ENCODE measurements at regions of chr2 and their contacts with region 1.

Region 1: DNA sequence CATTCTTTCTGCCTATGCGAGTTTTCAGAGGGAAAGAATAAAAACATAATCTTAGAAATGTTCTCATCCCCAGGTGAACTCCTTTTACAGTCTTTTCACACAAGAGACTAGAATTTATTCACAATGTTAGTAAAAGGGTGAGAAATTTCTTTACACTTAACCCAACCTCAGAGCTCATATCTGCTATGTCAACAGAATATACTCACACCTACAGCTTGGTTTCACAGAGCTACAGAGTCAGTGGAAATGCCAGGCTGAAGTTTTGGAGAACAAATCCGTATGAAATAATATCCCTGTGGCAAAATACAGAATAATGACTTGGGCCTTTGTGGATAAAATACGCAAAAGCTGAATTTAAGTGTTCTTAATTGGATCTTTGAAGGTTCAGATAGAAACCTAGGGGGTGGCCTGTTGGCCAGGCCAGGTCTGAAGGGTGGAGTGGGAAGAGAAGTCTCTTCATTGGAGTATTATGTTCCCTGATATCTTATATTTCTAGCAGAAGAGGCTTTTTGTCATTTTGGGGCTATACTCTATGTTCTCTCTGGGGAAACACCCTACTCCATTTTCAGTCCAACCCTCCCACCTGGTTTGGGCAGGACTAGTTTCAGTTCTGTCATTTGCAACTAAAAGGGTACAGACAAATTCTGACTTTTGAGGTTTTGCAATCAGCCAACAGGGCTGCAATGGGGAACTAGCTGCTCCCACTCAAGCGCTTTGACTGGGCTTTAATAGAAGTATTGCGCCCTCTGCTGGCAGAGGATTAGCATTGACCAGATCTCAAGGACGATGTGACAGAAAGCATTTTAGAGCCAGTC is 25.7 kb downstream of the FBXO48 start:
- DNase-seq: peak; percentile 38 to 86
- ATAC-seq: peak; percentile 90 to 95 (median 92)
- H3K4me3 ChIP-seq: no peak overlapping the region
- H3K27ac ChIP-seq: peak overlapping the region in 7 of 10 donors; percentile 16 to 64 (median 44)
- H3K4me1 ChIP-seq: peaks cover 3 to 30% (median 14%) of the 10 kb centered on the region in 9 donors
- H3K27me3 ChIP-seq: no peaks in the 10 kb centered on the region
- CTCF ChIP-seq: peak; percentile 83 to 95 (median 91)

Region 2: DNA sequence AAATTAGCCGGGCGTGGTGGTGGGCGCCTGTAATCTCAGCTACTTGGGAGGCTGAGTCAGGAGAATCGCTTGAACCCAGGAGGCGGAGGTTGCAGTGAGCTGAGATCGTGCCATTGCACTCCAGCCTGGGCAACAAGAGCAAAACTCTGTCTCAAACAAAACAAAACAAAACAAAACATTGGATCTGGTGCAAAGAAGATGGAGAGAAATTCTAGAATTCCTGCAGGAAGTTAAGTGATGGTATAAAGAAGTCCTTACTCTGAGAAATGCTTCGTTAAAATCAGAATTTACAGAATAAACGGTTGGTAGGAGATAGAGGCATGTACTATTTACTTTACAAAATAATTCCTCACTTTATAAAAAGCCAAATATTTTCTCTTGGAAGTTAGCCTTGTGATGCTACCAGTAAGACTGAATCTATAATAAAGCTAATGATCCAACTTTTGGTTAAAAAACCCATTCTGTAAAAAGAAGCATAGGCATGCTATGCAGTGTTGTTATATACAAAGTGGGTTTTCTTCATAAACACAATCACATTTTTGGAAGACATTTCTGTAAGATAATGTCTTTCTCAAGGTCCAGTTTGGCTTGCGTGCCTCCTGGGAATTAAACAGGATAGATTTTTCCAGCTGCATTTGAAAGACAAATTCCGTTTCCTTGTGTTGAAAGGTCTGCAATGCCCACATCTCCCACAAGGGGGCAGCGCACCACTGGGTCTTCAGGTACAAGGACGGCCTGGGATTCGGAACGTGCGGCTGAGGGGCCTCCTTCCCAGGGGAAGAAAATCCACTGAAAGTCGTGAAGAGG is 319.3 kb before region 1 on chr2:
- intact Hi-C with region 1: loop called in 9 of 10 experiments (anchors 1 to 10 kb)
- DNase-seq: peak; percentile 86 to 88
- ATAC-seq: peak in 7 of 8 donors; percentile 64 to 87 (median 84)
- H3K4me3 ChIP-seq: peak overlapping the region in 2 of 10 donors; percentile 5 to 14
- H3K27ac ChIP-seq: no peak overlapping the region
- H3K4me1 ChIP-seq: peaks cover 0 to 13% (median 8%) of the 10 kb centered on the region in 9 donors
- H3K27me3 ChIP-seq: no peaks in the 10 kb centered on the region
- CTCF ChIP-seq: peak in 8 of 9 donors; percentile 92 to 98 (median 98)

Region 3: GRCh38 chr2:68190991-68191731 is 250.2 kb before region 1 on chr2:
- intact Hi-C with region 1: loop called in 2 of 10 experiments (anchors 5 kb)
- DNase-seq: no peak
- ATAC-seq: no peak
- H3K4me3 ChIP-seq: no peak overlapping the region
- H3K27ac ChIP-seq: no peak overlapping the region
- H3K4me1 ChIP-seq: peaks cover 0 to 76% (median 26%) of the 10 kb centered on the region in 9 donors
- H3K27me3 ChIP-seq: no peaks in the 10 kb centered on the region
- CTCF ChIP-seq: no peak

Region 4: GRCh38 chr2:68196120-68196716 is 245.2 kb before region 1 on chr2:
- intact Hi-C with region 1: loop called in 2 of 10 experiments (anchors 5 kb)
- DNase-seq: peak in 1 of 2 donors; percentile 35
- ATAC-seq: peak in 2 of 8 donors; percentile 23 to 52
- H3K4me3 ChIP-seq: no peak overlapping the region
- H3K27ac ChIP-seq: no peak overlapping the region
- H3K4me1 ChIP-seq: peaks cover 0 to 79% (median 25%) of the 10 kb centered on the region in 9 donors
- H3K27me3 ChIP-seq: no peaks in the 10 kb centered on the region
- CTCF ChIP-seq: peak in 8 of 9 donors; percentile 50 to 85 (median 73)

Region 5: DNA sequence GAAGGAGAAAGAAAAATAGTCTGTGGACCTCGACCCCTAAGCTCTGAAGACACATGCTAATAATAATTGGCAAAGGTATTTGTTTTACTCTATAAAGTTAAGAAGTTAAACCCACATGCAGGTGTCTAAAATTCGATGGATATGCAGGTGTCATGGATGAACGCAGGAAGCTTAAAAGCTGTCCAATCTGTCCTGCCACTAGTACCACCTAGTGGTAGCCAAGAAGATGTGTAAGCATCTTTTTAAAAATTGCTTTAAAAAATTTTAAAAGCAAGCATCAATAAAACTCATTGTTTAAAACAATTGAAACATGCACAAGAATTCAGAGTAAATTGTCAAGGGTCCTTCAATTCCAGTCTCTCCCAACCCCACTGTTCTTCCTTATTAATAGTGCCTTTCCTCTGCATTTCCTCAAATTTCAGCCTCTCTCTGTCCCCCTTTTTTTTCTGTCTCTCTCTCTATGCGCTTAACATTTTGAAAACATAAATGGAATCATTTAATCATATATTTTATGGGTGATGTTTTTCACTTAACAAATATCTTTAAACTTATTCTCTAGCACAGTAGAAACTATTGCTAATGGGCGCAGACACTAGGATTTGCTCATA is 158.5 kb before region 1 on chr2:
- intact Hi-C with region 1: loop called in 1 of 10 experiments (anchors 10 kb)
- DNase-seq: no peak
- ATAC-seq: peak in 1 of 8 donors; percentile 59
- H3K4me3 ChIP-seq: no peak overlapping the region
- H3K27ac ChIP-seq: no peak overlapping the region
- H3K4me1 ChIP-seq: peaks cover 0 to 38% (median 18%) of the 10 kb centered on the region in 9 donors
- H3K27me3 ChIP-seq: no peaks in the 10 kb centered on the region
- CTCF ChIP-seq: peak; percentile 49 to 84 (median 74)

Region 6: DNA sequence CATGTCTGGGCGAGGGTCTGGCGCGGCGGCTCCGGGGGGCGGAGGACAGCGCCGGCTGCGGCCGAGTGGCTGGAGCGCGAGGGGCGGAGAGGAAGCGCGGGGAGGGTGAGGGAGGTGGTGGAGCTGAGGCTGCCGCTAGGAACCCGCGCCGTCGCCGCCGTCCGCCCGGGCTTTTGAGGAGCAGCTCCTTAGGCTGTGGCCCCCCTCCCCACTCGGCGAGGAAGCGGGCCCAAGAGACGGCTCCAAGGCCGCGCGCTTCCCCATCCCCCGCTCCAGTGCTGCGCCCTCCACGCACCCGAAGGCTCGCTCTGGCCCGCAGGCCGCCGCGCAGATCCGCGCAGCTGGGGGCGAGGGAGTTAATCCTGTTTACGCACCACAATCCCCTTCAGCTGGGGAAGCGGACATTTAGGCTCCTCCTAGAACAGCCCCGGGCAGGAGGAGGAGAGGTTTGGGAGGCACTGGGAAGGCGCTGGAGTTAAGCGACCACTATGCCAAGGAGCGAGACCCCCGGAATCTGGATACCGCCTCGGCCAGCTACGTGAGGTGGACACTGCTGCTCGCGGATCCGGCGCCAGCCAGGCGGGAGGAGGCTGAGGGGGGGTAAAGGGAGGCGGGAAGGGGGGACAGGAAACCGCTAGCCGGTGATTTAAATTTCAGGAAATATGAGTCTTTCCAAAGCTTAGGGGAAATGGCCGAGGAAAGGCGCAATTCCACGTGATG is 121.8 kb before region 1 on chr2 and contains the start of gene CNRIP1:
- intact Hi-C with region 1: loop called in 1 of 10 experiments (anchors 10 kb)
- DNase-seq: peak; percentile 77 to 87
- ATAC-seq: peak; percentile 84 to 95 (median 88)
- H3K4me3 ChIP-seq: peak within 1 kb of the TSS; percentile 61 to 93 (median 82)
- H3K27ac ChIP-seq: peak within 1 kb of the TSS; percentile 93 to 99 (median 98)
- H3K4me1 ChIP-seq: peaks cover 0 to 31% (median 20%) of the 10 kb centered on the region in 9 donors
- H3K27me3 ChIP-seq: peaks cover 0 to 27% (median 0%) of the 10 kb centered on the region in 7 donors
- CTCF ChIP-seq: peak in 3 of 9 donors; percentile 12 to 23 (median 20)
- total RNA-seq, gene CNRIP1: 4.8 to 13.4 (median 7.9) TPM

Region 7: DNA sequence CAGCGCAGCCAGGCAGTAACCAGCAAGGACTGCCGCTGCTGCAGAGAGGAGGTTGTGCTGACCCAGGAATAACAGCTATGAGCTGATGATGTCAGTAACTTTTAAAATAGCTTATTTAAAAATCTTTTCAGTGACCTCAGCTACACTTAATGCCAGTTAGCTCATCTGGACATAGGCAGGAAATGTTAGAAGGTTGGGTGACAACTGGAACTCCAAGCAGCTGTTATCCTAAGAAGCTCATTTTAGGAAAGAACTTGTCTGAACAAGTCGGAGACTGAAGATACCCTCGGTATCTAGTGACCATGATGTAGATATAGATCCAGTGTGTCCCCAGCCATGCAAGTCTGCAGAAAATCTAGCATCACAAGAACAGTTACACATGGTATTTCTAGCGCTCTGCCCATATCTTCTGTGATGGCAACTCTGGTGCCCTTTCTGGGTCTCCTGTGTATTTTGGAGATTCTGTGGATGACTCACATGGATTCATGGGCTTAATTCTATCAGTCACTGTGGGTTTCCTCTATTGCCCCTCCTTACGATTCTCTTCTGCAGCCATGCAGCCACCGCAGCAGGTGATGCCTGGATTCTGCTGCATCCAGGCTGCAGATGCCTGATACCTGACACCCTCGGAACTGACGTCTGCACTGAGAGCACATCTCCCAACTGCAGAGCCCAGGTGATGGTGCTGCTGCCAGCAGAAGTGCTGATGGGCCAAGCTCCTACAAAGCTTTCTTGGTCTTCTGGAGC is 96.1 kb before region 1 on chr2:
- intact Hi-C with region 1: no loop called
- DNase-seq: no peak
- ATAC-seq: no peak
- H3K4me3 ChIP-seq: no peak overlapping the region
- H3K27ac ChIP-seq: no peak overlapping the region
- H3K4me1 ChIP-seq: peaks cover 0 to 16% (median 0%) of the 10 kb centered on the region in 9 donors
- H3K27me3 ChIP-seq: peaks cover 0 to 15% (median 9%) of the 10 kb centered on the region in 7 donors
- CTCF ChIP-seq: no peak

Region 8: GRCh38 chr2:68362069-68362468 is 79.3 kb before region 1 on chr2:
- intact Hi-C with region 1: loop called in 9 of 10 experiments (anchors 1 to 10 kb)
- DNase-seq: peak; percentile 73 to 77
- ATAC-seq: peak; percentile 56 to 81 (median 73)
- H3K4me3 ChIP-seq: peak overlapping the region in 2 of 10 donors; percentile 12 to 26
- H3K27ac ChIP-seq: peak overlapping the region in 2 of 10 donors; percentile 0 to 87
- H3K4me1 ChIP-seq: peaks cover 0 to 27% (median 4%) of the 10 kb centered on the region in 9 donors
- H3K27me3 ChIP-seq: no peaks in the 10 kb centered on the region
- CTCF ChIP-seq: peak; percentile 67 to 83 (median 76)

Measured in heart right ventricle (tissue), 16 donors.